Sigmoid colon (tissue), 7 donors: ENCODE measurements at regions of chr4 and their contacts with region 1.

Region 1: GRCh38 chr4:37891260-37892159 is 626 bp downstream of the TBC1D1 start:
- DNase-seq: peak; percentile 86
- H3K4me3 ChIP-seq: peak overlapping the region; percentile 75 to 97 (median 87)
- H3K27ac ChIP-seq: peak overlapping the region; percentile 88 to 98 (median 94)
- H3K4me1 ChIP-seq: peaks cover 0 to 66% (median 50%) of the 10 kb centered on the region in 4 donors
- H3K27me3 ChIP-seq: no peaks in the 10 kb centered on the region
- CTCF ChIP-seq: no peak
- EP300 ChIP-seq: peak in 3 of 4 donors; percentile 15 to 69 (median 35)
- POLR2A ChIP-seq: no peak

Region 2: DNA sequence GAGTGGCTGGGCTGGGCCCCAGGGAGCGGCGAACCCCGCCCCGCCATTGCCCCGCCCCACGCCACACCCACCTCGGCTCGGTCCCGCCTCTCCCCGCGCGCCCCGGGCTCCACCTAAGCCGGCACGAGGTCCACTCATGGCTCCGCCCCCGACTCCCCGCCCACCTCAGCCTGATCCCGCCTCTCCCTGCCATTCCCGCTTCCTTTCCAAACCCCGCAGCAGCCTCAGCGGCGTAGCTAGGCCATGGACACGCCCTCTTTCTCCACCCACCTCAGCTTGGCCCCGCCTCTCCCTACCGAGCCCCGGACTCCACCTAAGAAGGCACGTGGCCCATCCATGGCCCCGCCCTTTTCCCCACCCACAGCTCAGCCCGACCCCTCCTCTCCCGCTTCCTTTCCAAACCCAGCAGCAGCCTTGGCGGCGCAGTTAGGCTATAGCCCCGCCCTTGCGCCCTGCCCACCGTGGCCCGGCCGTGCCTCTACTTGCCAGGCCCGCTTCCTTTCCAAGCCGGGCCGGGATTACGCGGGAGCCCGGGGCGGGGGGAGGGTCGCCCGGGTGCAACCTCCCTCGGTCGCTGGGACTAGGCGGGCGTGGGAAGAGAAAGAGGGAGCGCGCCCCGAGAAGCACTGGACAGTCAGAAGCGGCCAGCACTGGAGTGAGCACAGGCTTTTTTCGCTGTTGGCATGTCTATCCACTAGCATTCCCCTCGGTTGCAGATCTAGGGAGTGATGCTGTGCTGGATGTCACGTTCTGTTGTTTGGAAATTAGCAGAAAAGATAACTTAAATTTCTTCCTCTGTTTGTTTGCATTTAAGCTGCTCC is 204.9 kb before region 1 on chr4 and contains the start of gene RELL1:
- intact Hi-C with region 1: loop called (anchors 5 kb)
- DNase-seq: peak; percentile 100
- H3K4me3 ChIP-seq: peak within 1 kb of the TSS; percentile 81 to 98 (median 89)
- H3K27ac ChIP-seq: peak within 1 kb of the TSS; percentile 96 to 100 (median 98)
- H3K4me1 ChIP-seq: peaks cover 0 to 38% (median 28%) of the 10 kb centered on the region in 4 donors
- H3K27me3 ChIP-seq: no peaks in the 10 kb centered on the region
- CTCF ChIP-seq: no peak
- EP300 ChIP-seq: no peak
- POLR2A ChIP-seq: no peak
- total RNA-seq, gene RELL1: 38.8 to 63.2 (median 47.1) TPM

Region 3: DNA sequence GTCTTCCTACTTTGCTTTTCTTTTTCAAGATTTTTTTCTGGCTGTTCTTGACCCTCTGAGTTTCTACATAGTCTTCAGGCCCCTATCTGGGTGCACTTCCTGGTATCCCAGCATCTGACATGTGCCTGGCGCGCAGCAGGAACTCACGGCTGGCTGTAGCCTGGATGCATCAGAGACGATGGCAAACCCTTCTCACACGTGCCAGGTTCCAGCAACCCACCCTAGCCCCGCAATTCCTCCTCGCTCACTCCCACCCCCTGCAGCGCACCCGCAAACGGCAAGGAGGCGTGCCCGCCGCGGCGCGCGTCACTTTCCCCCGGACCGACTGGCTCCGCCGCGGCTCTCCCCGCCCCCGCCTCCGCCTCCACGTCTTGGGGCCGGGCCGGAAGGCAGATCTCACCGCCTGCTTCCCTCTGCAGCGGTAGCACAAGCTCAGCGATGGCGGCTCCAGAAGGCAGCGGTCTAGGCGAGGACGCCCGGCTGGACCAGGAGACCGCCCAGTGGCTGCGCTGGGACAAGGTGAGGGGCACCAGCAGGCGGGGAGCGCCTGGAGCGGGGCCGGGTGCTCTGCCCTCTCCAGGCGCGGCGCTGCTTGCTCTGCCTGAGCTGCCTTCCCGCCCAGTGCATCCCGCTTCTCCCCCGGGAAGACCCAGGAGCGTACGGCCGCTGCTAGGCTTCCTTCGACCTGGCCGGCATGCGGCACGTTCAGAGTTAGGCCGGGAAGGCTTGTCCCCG is 65.0 kb before region 1 on chr4 and contains the start of gene PGM2:
- intact Hi-C with region 1: loop called (anchors 2 kb)
- DNase-seq: peak; percentile 93
- H3K4me3 ChIP-seq: peak within 1 kb of the TSS; percentile 71 to 87 (median 83)
- H3K27ac ChIP-seq: peak within 1 kb of the TSS; percentile 83 to 94 (median 84)
- H3K4me1 ChIP-seq: peaks cover 0 to 34% (median 22%) of the 10 kb centered on the region in 4 donors
- H3K27me3 ChIP-seq: no peaks in the 10 kb centered on the region
- CTCF ChIP-seq: peak in 1 of 4 experiments; percentile 7
- EP300 ChIP-seq: peak in 1 of 4 donors; percentile 4
- POLR2A ChIP-seq: peak; percentile 76 to 88
- total RNA-seq, gene PGM2: 30.0 to 42.3 (median 33.8) TPM

Region 4: DNA sequence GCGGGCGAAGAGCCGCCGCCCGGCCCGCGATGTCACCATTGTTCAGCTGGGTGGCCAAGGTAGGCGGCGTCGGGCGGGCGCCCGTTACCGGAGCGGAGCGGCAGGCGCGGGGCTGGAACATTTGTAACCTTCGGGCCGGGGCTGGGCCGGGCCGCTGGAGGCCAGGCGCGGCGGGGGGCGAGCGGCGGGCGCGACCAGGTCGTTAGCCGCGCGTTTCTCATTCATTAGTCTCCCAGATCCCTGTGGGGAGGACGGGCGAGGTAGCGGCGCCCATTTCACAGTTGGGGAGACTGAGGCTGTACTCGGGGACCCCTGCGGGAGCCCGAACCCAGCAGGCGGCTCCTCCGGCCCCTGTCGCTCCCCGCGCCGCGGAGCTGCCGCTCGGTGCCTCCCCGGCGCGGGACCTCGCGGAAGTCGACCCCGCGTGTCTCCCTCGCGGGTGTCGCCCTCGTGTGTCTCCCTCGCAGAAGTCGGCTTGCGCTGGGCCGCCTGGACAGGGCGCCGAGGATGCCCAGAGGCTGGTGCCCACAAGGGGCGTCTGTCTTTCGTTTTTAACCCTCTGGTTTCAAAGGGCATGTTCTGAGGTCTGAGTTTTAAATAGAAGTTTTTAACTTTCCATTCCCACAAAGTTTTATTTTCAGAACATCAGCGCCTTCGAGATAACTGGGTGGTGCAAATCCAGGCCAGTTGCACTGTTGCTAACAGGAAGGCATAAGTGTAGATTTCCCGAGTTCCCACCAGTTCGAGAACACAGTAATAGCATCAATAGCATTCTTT is 86.1 kb after region 1 on chr4:
- intact Hi-C with region 1: loop called (anchors 5 kb)
- DNase-seq: peak; percentile 90
- H3K4me3 ChIP-seq: peak overlapping the region; percentile 61 to 98 (median 80)
- H3K27ac ChIP-seq: peak overlapping the region; percentile 96 to 98 (median 98)
- H3K4me1 ChIP-seq: peaks cover 0 to 52% (median 47%) of the 10 kb centered on the region in 4 donors
- H3K27me3 ChIP-seq: no peaks in the 10 kb centered on the region
- CTCF ChIP-seq: peak; percentile 63 to 75 (median 72)
- EP300 ChIP-seq: no peak
- POLR2A ChIP-seq: no peak

Region 5: DNA sequence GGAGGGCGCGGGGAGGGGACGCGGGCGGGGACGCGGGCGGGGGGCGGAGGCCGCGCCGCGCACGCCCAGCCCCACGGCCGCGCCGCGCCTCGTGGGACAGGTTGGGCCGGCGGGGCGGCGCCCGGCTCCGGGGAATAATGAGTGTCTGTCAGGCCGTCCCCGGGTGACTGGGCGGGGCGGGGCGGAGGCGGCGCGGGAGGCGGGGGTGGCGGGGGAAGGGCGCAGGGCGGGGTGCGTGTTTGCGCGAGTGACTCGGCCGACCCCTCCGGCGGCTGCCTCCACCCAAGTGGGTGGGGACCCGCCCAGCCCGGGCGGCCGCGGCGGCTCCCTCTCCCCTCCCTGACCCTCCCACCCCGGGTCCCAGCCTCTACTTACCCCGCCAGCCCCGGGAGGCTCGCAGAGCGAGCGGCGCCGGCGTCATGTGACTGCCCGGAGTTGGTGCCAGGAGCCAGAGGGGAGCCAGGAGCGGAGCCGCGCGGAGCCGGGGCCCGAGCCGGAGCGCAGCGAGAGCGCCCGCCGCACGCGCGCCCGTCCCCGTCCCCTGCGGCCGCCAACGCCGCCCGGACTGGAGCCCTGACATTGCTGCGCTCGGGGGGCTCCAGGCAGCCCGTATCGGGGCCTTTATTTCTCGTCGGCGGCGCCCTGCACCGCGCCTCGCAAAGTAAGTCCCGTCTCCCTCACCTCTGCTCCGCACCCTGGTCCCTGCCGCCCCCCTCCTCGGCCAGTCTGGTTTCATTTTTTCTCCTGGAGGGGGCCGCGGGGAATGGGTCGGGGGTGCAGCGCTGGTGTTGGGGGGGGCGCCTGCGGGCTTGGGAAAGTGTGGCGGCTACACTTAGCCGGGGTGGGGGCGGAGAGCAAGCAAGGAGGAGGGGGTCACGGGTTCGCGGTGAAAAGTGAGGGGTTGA is 772.5 kb after region 1 on chr4 and contains the start of gene KLF3:
- intact Hi-C with region 1: loop called (anchors 10 kb)
- DNase-seq: peak; percentile 97
- H3K4me3 ChIP-seq: peak within 1 kb of the TSS; percentile 94 to 100 (median 98)
- H3K27ac ChIP-seq: peak within 1 kb of the TSS; percentile 99 to 100 (median 100)
- H3K4me1 ChIP-seq: peaks cover 0 to 50% (median 40%) of the 10 kb centered on the region in 4 donors
- H3K27me3 ChIP-seq: no peaks in the 10 kb centered on the region
- CTCF ChIP-seq: no peak
- EP300 ChIP-seq: peak in 2 of 4 donors; percentile 40 to 43
- POLR2A ChIP-seq: peak; percentile 52 to 54
- total RNA-seq, gene KLF3: 29.2 to 43.5 (median 38.0) TPM